Vagina (tissue), 2 donors: ENCODE measurements at regions of chr9 and their contacts with region 1.

Region 1: DNA sequence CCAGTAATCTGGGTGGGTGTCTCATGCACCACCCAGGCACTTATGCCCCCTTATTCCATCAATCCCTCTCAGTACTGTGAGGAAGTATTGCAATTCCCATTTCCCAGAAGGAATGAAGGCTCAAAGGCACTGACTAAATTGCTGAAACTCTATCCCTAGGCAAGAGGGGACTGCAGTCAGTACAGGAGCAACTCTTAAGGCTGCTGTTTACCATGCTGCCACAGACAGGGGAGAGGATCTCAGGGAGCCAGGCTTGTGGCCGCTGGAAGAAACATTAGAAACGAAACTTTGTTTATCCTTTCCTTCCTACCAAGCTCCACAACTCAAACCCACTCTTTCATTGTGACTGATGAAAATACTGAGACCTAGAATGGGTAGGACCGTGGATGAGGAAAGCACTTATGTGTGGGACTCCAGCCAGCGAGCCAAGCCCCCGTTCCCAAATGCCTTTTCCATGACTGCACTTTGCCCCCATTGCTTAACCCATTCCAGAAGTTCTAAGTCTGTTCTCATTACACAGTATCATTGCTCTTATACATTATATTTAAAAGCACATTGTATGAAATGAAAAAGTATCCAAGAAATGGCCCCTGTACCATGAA is 54.3 kb downstream of the TLE1 start:
- DNase-seq: no peak
- H3K4me3 ChIP-seq: no peak overlapping the region
- H3K27ac ChIP-seq: no peak overlapping the region
- H3K4me1 ChIP-seq: no peaks in the 10 kb centered on the region
- H3K27me3 ChIP-seq: no peaks in the 10 kb centered on the region
- CTCF ChIP-seq: no peak
- POLR2A ChIP-seq: no peak

Region 2: GRCh38 chr9:81431641-81432040 is 203.4 kb before region 1 on chr9:
- intact Hi-C with region 1: no loop called
- DNase-seq: no peak
- H3K4me3 ChIP-seq: no peak overlapping the region
- H3K27ac ChIP-seq: no peak overlapping the region
- H3K4me1 ChIP-seq: peaks cover 12% of the 10 kb centered on the region
- H3K27me3 ChIP-seq: no peaks in the 10 kb centered on the region
- CTCF ChIP-seq: no peak
- POLR2A ChIP-seq: no peak

Region 3: DNA sequence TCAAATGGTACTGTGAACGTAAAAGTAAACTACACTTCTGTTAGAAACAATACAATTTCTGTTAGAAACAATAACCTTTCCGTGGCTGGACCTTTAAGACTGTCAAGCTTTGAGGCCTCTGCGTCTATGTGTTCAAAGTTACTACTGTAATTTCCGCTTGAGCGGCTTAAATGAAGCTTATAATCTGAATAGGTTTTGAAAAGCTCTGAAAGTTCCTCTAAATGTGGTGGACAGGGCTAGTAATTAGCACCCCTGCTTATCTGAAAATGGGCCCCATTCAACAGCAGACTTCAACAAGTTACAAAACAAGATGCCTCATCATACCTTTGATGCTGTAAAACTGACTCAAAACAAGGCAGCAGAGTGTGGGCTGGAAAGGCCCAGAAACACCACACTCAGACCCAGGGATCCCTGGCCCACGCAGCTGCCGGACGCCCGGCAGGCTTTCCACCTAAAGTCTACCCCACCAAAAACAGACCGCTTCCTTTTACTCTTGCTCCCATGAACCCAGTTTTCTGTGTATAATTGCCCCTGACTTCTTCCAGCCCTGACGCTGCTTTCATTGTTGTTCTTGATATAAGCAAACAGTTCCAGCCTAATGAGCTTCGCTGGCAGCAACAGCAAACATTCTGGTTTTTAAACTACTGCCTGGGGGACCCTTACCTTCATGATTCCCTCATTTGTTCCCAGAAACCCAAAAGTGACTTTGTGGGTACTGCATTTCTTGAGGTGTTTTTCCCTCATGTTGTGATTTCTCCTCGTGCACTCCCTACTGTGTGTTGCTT is 12.4 kb before region 1 on chr9:
- intact Hi-C with region 1: loop called (anchors 1 kb)
- DNase-seq: no peak
- H3K4me3 ChIP-seq: no peak overlapping the region
- H3K27ac ChIP-seq: no peak overlapping the region
- H3K4me1 ChIP-seq: peaks cover 13% of the 10 kb centered on the region
- H3K27me3 ChIP-seq: no peaks in the 10 kb centered on the region
- CTCF ChIP-seq: no peak
- POLR2A ChIP-seq: no peak